Endothelial cell of umbilical vein (primary cell): ENCODE measurements at regions of chr20 and their contacts with region 1.

Region 1: GRCh38 chr20:52060794-52061714 is 130.5 kb downstream of the ZFP64 start:
- DNase-seq: peak; percentile 82
- H3K4me3 ChIP-seq: no peak overlapping the region
- H3K27ac ChIP-seq: peak overlapping the region; percentile 62
- H3K4me1 ChIP-seq: peaks cover 9% of the 10 kb centered on the region
- H3K27me3 ChIP-seq: no peaks in the 10 kb centered on the region
- CTCF ChIP-seq: peak; percentile 50 to 55
- POLR2A ChIP-seq: no peak

Region 2: GRCh38 chr20:51639206-51639832 is 421.7 kb before region 1 on chr20:
- CTCF ChIA-PET with region 1: interaction called, 7 read pairs
- POLR2A ChIA-PET with region 1: no interaction called
- dilution Hi-C with region 1: no loop called
- intact Hi-C with region 1: loop called (anchors 1 kb)
- DNase-seq: peak; percentile 84
- H3K4me3 ChIP-seq: no peak overlapping the region
- H3K27ac ChIP-seq: no peak overlapping the region
- H3K4me1 ChIP-seq: peaks cover 3% of the 10 kb centered on the region
- H3K27me3 ChIP-seq: no peaks in the 10 kb centered on the region
- CTCF ChIP-seq: peak; percentile 83 to 88
- POLR2A ChIP-seq: no peak

Region 3: GRCh38 chr20:51930775-51931174 is 130.3 kb before region 1 on chr20:
- CTCF ChIA-PET with region 1: interaction called, 12 read pairs
- POLR2A ChIA-PET with region 1: no interaction called
- dilution Hi-C with region 1: no loop called
- intact Hi-C with region 1: no loop called
- DNase-seq: peak; percentile 95
- H3K4me3 ChIP-seq: no peak overlapping the region
- H3K27ac ChIP-seq: peak overlapping the region; percentile 79
- H3K4me1 ChIP-seq: peaks cover 51% of the 10 kb centered on the region
- H3K27me3 ChIP-seq: no peaks in the 10 kb centered on the region
- CTCF ChIP-seq: no peak
- POLR2A ChIP-seq: no peak

Region 4: GRCh38 chr20:51984931-51985415 is 76.1 kb before region 1 on chr20:
- CTCF ChIA-PET with region 1: interaction called, 9 read pairs
- POLR2A ChIA-PET with region 1: no interaction called
- dilution Hi-C with region 1: no loop called
- intact Hi-C with region 1: loop called (anchors 1 kb)
- DNase-seq: peak; percentile 96
- H3K4me3 ChIP-seq: no peak overlapping the region
- H3K27ac ChIP-seq: peak overlapping the region; percentile 82
- H3K4me1 ChIP-seq: peaks cover 13% of the 10 kb centered on the region
- H3K27me3 ChIP-seq: no peaks in the 10 kb centered on the region
- CTCF ChIP-seq: no peak
- POLR2A ChIP-seq: no peak

Region 5: GRCh38 chr20:52031563-52032303 is 29.3 kb before region 1 on chr20:
- CTCF ChIA-PET with region 1: interaction called, 6 read pairs
- POLR2A ChIA-PET with region 1: no interaction called
- dilution Hi-C with region 1: no loop called
- intact Hi-C with region 1: loop called (anchors 1 kb)
- DNase-seq: peak; percentile 98
- H3K4me3 ChIP-seq: no peak overlapping the region
- H3K27ac ChIP-seq: peak overlapping the region; percentile 95
- H3K4me1 ChIP-seq: peaks cover 28% of the 10 kb centered on the region
- H3K27me3 ChIP-seq: no peaks in the 10 kb centered on the region
- CTCF ChIP-seq: no peak
- POLR2A ChIP-seq: no peak

Region 6: GRCh38 chr20:52349806-52350205 is 288.8 kb after region 1 on chr20:
- CTCF ChIA-PET with region 1: no interaction called
- POLR2A ChIA-PET with region 1: no interaction called
- dilution Hi-C with region 1: no loop called
- intact Hi-C with region 1: no loop called
- DNase-seq: peak; percentile 86
- H3K4me3 ChIP-seq: no peak overlapping the region
- H3K27ac ChIP-seq: no peak overlapping the region
- H3K4me1 ChIP-seq: peaks cover 8% of the 10 kb centered on the region
- H3K27me3 ChIP-seq: no peaks in the 10 kb centered on the region
- CTCF ChIP-seq: no peak
- POLR2A ChIP-seq: no peak